ENCODE measurements at regions of chr16 and their contacts with region 1.

Region 1: DNA sequence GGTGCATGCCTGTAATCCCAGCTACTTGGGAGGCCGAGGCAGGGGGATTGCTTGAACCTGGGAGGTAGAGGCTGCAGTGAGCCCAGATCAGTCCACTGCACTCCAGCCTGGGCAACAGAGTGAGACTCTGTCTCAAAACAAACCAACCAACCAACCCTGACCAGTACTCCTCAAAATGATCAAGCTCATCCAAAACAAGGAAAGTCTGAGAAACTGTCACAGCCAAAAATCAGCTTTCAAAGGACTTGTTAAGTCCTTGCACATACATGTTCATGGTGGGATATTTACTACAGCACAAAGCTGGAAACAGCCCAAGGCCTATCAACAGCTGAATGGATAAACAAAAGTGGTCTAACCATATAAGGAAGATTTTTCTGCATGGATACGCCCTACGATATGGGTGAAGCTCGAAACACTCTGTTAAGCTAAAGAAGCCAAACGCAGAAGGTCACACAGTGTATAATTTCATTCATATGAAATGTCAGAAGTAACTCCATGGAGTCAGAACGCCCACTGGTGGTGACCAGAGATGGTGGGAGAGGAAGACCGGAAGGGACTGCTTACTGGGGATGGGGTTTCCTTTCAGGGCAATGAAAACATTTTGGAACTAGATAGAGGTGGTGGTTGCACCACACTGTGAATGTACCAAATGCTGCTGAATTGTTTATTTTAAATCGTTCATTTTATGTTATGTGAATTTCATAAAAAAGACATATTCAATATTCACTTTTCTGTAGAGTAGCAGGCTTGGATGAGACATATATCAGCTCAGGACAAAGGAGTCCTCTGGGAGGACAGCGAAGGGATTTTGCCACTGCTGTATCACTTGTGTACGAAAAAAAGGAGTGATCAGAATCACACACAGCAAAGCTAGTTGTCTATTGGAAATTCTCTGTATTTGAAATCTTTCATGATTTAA is 17.7 kb downstream of the CCL17 start:
- DNase-seq: no peak
- ATAC-seq: peak; percentile 49
- H3K4me3 ChIP-seq: no peak overlapping the region
- H3K27ac ChIP-seq: no peak overlapping the region
- H3K4me1 ChIP-seq: peaks cover 4% of the 10 kb centered on the region
- H3K27me3 ChIP-seq: no peaks in the 10 kb centered on the region
- CTCF ChIP-seq: peak; percentile 48 to 62 (median 62); a peak in 5 of 6 replicates
- EP300 ChIP-seq: no peak
- POLR2A ChIP-seq: no peak
- RAD21 ChIP-seq: peak; percentile 71

Region 2: DNA sequence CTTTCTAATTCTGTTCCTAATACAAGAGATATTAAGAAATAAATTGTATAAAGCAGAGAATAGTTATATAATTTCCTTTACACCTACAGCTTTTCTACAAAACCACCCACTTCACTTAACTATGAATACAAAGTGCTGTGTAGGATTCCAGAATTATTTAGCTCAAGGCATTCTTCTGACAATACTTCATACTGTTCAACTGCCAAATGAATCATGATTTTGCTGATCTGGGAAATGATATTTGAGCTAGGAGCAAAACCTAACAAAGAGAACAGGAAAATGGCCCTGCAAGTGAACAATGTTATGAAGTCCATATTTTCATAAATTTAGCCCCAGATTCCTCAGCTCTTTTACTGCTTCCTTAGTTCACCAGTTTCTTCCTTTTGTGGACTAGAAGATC is 915.3 kb before region 1 on chr16:
- CTCF ChIA-PET with region 1: no interaction called
- POLR2A ChIA-PET with region 1: no interaction called
- RAD21 ChIA-PET with region 1: no interaction called
- SMC1A ChIA-PET with region 1: no interaction called
- in situ Hi-C with region 1: no loop called
- intact Hi-C with region 1: no loop called
- DNase-seq: no peak
- ATAC-seq: no peak
- H3K4me3 ChIP-seq: no peak overlapping the region
- H3K27ac ChIP-seq: no peak overlapping the region
- H3K4me1 ChIP-seq: no peaks in the 10 kb centered on the region
- H3K27me3 ChIP-seq: no peaks in the 10 kb centered on the region
- CTCF ChIP-seq: no peak
- EP300 ChIP-seq: no peak
- POLR2A ChIP-seq: no peak
- RAD21 ChIP-seq: no peak

Region 3: DNA sequence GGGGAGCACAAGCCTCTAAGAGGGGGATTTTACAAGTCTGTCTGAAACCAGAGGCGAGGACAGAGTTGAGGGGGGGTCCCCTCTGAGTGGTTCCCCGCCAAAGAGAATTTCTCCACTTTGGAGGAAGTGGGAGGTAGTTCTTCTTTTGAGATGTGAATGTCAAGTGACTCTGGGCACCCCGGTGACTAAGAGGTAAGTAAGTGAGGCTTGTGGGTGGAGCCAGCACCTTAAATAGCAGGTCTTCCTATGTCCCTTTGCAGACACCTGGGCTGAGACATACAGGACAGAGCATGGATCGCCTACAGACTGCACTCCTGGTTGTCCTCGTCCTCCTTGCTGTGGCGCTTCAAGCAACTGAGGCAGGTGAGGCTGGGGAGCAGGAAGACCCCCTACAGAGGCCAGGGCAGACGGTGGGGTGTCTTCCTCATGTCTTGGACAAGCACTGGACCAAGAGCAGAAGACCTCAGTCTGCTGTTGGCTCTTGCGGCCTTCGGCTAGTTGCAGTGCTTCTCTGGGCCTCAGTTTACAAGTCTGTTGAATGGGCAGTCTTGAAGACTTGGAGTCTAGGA is 63.7 kb before region 1 on chr16 and contains the start of gene CCL22:
- CTCF ChIA-PET with region 1: interaction called, 15 read pairs
- POLR2A ChIA-PET with region 1: interaction called, 4 read pairs
- RAD21 ChIA-PET with region 1: interaction called, 15 read pairs
- SMC1A ChIA-PET with region 1: interaction called, 4 read pairs
- in situ Hi-C with region 1: no loop called
- intact Hi-C with region 1: no loop called
- DNase-seq: peak; percentile 45
- ATAC-seq: peak; percentile 71
- H3K4me3 ChIP-seq: peak within 1 kb of the TSS; percentile 37; the same call in 1 of the 2 replicates
- H3K27ac ChIP-seq: peak within 1 kb of the TSS; percentile 30
- H3K4me1 ChIP-seq: peaks cover 23% of the 10 kb centered on the region
- H3K27me3 ChIP-seq: no peaks in the 10 kb centered on the region
- CTCF ChIP-seq: no peak
- EP300 ChIP-seq: no peak; a peak in 1 of 4 replicates
- POLR2A ChIP-seq: peak; percentile 89
- RAD21 ChIP-seq: no peak
- polyA plus RNA-seq, gene CCL22: 581 to 591 TPM

Region 4: GRCh38 chr16:57372372-57373116 is 49.7 kb before region 1 on chr16 and contains the start of gene CX3CL1:
- CTCF ChIA-PET with region 1: interaction called, 30 read pairs
- POLR2A ChIA-PET with region 1: interaction called, 6 read pairs
- RAD21 ChIA-PET with region 1: interaction called, 41 read pairs
- SMC1A ChIA-PET with region 1: interaction called, 23 read pairs
- in situ Hi-C with region 1: no loop called
- intact Hi-C with region 1: loop called (anchors 1 kb)
- DNase-seq: no peak
- ATAC-seq: peak; percentile 16
- H3K4me3 ChIP-seq: no peak within 1 kb of the TSS
- H3K27ac ChIP-seq: no peak within 1 kb of the TSS
- H3K4me1 ChIP-seq: peaks cover 14% of the 10 kb centered on the region
- H3K27me3 ChIP-seq: no peaks in the 10 kb centered on the region
- CTCF ChIP-seq: no peak
- EP300 ChIP-seq: 0 out of 4 replicates have a peak, but pooled peaks of 1 of the 2 experiments have one; percentile 22
- POLR2A ChIP-seq: no peak
- RAD21 ChIP-seq: no peak
- polyA plus RNA-seq, gene CX3CL1: 0.03 to 0.05 TPM

Region 5: GRCh38 chr16:57507136-57508034 is 85.1 kb after region 1 on chr16:
- CTCF ChIA-PET with region 1: interaction called, 6 read pairs
- POLR2A ChIA-PET with region 1: no interaction called
- RAD21 ChIA-PET with region 1: no interaction called
- SMC1A ChIA-PET with region 1: interaction called, 3 read pairs
- in situ Hi-C with region 1: no loop called
- intact Hi-C with region 1: loop called (anchors 2 kb)
- DNase-seq: no peak
- ATAC-seq: no peak
- H3K4me3 ChIP-seq: no peak overlapping the region
- H3K27ac ChIP-seq: no peak overlapping the region
- H3K4me1 ChIP-seq: no peaks in the 10 kb centered on the region
- H3K27me3 ChIP-seq: no peaks in the 10 kb centered on the region; a peak in 2 of 4 replicates
- CTCF ChIP-seq: no peak
- EP300 ChIP-seq: no peak
- POLR2A ChIP-seq: no peak
- RAD21 ChIP-seq: no peak

Measured in GM12878 (cell line).